ENCODE measurements at regions of chr10 and their contacts with region 1.

Region 1: GRCh38 chr10:28367929-28368484 is 65.1 kb upstream of the MPP7 start:
- DNase-seq: peak; percentile 62
- H3K4me3 Mint-ChIP-seq: peak overlapping the region; percentile 75
- H3K27ac Mint-ChIP-seq: peak overlapping the region; percentile 93
- H3K4me1 Mint-ChIP-seq: peaks cover 27% of the 10 kb centered on the region
- H3K27me3 Mint-ChIP-seq: peaks cover 9% of the 10 kb centered on the region

Region 2: DNA sequence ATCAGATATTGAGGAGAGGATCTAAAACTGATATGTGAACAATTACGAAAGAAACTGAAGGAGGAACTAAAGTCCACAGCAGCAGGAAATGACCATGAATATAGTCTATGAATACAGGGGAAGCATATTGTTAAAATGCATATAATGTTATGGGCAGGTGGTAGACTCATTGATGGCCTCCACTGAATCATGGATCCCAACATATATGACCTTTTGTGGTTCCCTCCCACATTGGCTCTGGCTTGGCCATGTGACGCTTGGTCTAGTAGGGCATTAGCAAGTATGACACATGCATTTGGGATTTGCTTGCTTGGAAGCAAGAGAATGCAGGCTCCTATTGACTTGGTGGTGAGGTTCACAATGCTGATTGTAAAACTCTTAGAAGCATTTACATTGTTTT is 919.1 kb before region 1 on chr10:
- intact Hi-C with region 1: no loop called
- DNase-seq: no peak
- H3K4me3 Mint-ChIP-seq: no peak overlapping the region
- H3K27ac Mint-ChIP-seq: no peak overlapping the region
- H3K4me1 Mint-ChIP-seq: no peaks in the 10 kb centered on the region
- H3K27me3 Mint-ChIP-seq: peaks cover 6% of the 10 kb centered on the region

Region 3: DNA sequence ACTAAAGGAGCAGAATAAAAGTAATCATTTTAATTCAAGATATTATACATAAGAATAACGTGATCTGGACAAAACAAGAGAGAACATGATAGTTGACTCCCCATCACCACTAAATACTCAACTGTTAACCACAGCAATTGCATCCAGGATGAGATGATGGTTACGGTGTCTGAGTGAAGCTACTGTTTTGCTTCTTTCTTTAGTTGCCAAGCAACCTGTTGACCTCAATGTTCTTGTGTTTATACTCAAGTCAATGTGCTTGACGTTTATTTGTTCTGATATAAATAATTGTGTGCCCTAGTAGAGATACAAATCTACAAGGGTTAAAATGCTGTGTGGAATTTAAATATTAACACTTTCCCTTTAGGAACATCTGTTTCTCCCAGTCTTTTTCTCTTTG is 33.7 kb before region 1 on chr10:
- intact Hi-C with region 1: loop called (anchors 1 kb)
- DNase-seq: peak; percentile 66
- H3K4me3 Mint-ChIP-seq: peak overlapping the region; percentile 81
- H3K27ac Mint-ChIP-seq: peak overlapping the region; percentile 99
- H3K4me1 Mint-ChIP-seq: peaks cover 67% of the 10 kb centered on the region
- H3K27me3 Mint-ChIP-seq: peaks cover 21% of the 10 kb centered on the region

Measured in activated T-helper 1 cell treated with anti-CD3 and anti-CD28 coated beads, Interleukin-12 subunit alpha, Interleukin-12 subunit beta, Interleukin-2, Interleukin-4 antibody, amounts not matched to agents 30 ng/mL and 10 ng/mL and 1 ng/mL, durations not matched to agents 14 hours and 24 hours and 36 hours (primary cell).